Activated CD4-positive, alpha-beta T cell treated with anti-CD3 and anti-CD28 coated beads for 36 hours (primary cell): ENCODE measurements at regions of chr12 and their contacts with region 1.

Region 1: GRCh38 chr12:6688999-6689882 is at the start of gene ZNF384:
- DNase-seq: peak; percentile 96
- ATAC-seq: peak; percentile 84
- H3K4me3 Mint-ChIP-seq: peak within 1 kb of the TSS; percentile 86
- H3K27ac Mint-ChIP-seq: peak within 1 kb of the TSS; percentile 92
- H3K4me1 Mint-ChIP-seq: peaks cover 41% of the 10 kb centered on the region
- H3K27me3 Mint-ChIP-seq: no peaks in the 10 kb centered on the region
- total RNA-seq, gene ZNF384: 61.4 to 79.0 TPM

Region 2: DNA sequence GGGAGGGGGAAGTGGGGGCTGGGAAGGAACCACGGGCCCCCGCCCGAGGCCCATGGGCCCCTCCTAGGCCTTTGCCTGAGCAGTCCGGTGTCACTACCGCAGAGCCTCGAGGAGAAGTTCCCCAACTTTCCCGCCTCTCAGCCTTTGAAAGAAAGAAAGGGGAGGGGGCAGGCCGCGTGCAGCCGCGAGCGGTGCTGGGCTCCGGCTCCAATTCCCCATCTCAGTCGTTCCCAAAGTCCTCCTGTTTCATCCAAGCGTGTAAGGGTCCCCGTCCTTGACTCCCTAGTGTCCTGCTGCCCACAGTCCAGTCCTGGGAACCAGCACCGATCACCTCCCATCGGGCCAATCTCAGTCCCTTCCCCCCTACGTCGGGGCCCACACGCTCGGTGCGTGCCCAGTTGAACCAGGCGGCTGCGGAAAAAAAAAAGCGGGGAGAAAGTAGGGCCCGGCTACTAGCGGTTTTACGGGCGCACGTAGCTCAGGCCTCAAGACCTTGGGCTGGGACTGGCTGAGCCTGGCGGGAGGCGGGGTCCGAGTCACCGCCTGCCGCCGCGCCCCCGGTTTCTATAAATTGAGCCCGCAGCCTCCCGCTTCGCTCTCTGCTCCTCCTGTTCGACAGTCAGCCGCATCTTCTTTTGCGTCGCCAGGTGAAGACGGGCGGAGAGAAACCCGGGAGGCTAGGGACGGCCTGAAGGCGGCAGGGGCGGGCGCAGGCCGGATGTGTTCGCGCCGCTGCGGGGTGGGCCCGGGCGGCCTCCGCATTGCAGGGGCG is 155.1 kb before region 1 on chr12 and contains the start of gene GAPDH:
- CTCF ChIA-PET with region 1: interaction called, 3 read pairs
- POLR2A ChIA-PET with region 1: interaction called, 10 read pairs
- intact Hi-C with region 1: loop called in 1 of 2 experiments (anchors 1 kb)
- DNase-seq: peak; percentile 95
- ATAC-seq: peak; percentile 53
- H3K4me3 Mint-ChIP-seq: peak within 1 kb of the TSS; percentile 98
- H3K27ac Mint-ChIP-seq: peak within 1 kb of the TSS; percentile 100
- H3K4me1 Mint-ChIP-seq: peaks cover 37% of the 10 kb centered on the region
- H3K27me3 Mint-ChIP-seq: no peaks in the 10 kb centered on the region
- total RNA-seq, gene GAPDH: 7,289 to 9,770 TPM

Region 3: GRCh38 chr12:6607751-6608591 is 81.3 kb before region 1 on chr12:
- CTCF ChIA-PET with region 1: interaction called, 6 read pairs
- POLR2A ChIA-PET with region 1: interaction called, 8 read pairs
- intact Hi-C with region 1: loop called (anchors 1 to 5 kb)
- DNase-seq: peak; percentile 84
- ATAC-seq: peak; percentile 60
- H3K4me3 Mint-ChIP-seq: no peak overlapping the region
- H3K27ac Mint-ChIP-seq: no peak overlapping the region
- H3K4me1 Mint-ChIP-seq: peaks cover 52% of the 10 kb centered on the region
- H3K27me3 Mint-ChIP-seq: no peaks in the 10 kb centered on the region

Region 4: DNA sequence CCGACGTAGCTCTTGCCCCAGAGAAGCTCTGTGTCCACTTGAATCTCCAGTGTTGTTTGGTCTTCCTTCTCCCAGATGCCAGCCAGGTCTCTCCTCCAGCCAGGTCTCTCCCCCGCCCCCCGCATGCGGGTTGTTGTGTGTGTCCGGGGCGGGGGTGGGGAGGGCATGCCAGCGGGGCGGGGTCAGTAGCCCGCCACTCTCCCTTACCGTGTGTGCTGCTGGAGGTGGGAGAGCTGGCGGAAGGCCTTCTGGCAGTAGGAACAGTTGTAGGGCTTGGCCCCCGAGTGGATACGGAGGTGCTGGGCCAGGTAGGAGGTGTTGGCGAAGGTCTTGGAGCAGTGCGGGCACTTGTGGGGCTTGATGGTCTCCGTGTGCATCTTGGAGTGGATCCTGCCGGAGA is 17.1 kb before region 1 on chr12:
- CTCF ChIA-PET with region 1: interaction called, 16 read pairs
- POLR2A ChIA-PET with region 1: no interaction called
- intact Hi-C with region 1: no loop called
- DNase-seq: no peak
- ATAC-seq: no peak
- H3K4me3 Mint-ChIP-seq: no peak overlapping the region
- H3K27ac Mint-ChIP-seq: no peak overlapping the region
- H3K4me1 Mint-ChIP-seq: no peaks in the 10 kb centered on the region
- H3K27me3 Mint-ChIP-seq: no peaks in the 10 kb centered on the region

Region 5: GRCh38 chr12:6825398-6826124 is 136.3 kb after region 1 on chr12:
- CTCF ChIA-PET with region 1: interaction called, 3 read pairs
- POLR2A ChIA-PET with region 1: interaction called, 3 read pairs
- intact Hi-C with region 1: loop called in 1 of 2 experiments (anchors 1 kb)
- DNase-seq: peak; percentile 91
- ATAC-seq: peak; percentile 64
- H3K4me3 Mint-ChIP-seq: no peak overlapping the region
- H3K27ac Mint-ChIP-seq: peak overlapping the region; percentile 16
- H3K4me1 Mint-ChIP-seq: peaks cover 36% of the 10 kb centered on the region
- H3K27me3 Mint-ChIP-seq: peaks cover 32% of the 10 kb centered on the region

Region 6: DNA sequence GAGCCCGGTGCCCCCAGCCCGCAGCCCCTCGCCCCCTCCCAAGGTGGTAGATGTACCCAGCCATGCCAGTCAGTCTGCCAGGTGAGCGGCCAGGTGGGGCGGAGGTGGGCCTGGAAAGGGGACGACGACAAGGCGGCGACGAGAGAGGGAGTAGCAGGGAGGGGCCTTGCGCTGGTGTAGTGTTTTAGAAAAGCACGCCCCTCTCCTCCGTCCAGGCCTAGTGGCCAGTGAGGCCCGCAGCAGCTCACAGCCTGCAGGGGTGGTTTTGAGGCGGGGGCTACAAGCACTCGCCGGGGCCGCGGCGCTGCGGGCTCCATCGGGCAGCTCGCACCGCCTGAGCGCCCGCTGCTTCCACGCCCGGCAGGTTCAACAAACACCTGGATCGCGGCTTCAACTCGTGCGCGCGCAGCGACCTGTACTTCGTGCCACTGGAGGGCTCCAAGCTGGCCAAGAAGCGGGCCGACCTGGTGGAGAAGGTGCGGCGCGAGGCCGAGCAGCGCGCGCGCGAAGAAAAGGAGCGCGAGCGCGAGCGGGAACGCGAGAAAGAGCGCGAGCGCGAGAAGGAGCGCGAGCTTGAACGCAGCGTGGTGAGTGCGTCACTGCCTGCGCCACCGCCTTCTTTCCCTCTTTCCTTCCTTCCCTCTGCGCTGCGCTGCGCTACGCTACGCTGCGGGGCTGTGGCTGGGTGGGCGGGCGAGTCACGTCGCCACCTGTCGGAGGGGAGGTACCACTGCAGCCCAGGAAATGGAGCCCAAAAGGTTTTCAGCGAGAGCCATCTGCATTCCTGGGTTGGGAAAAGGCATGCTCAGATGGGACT is 248.4 kb after region 1 on chr12:
- CTCF ChIA-PET with region 1: no interaction called
- POLR2A ChIA-PET with region 1: no interaction called
- intact Hi-C with region 1: loop called in 1 of 2 experiments (anchors 1 kb)
- DNase-seq: peak; percentile 97
- ATAC-seq: peak; percentile 93
- H3K4me3 Mint-ChIP-seq: peak overlapping the region; percentile 83
- H3K27ac Mint-ChIP-seq: peak overlapping the region; percentile 96
- H3K4me1 Mint-ChIP-seq: peaks cover 52% of the 10 kb centered on the region
- H3K27me3 Mint-ChIP-seq: no peaks in the 10 kb centered on the region